GM12878 (cell line): ENCODE measurements at regions of chr9 and their contacts with region 1.

Region 1: GRCh38 chr9:128254855-128255759 is 20.7 kb downstream of the GOLGA2 start:
- DNase-seq: no peak
- ATAC-seq: peak; percentile 77
- H3K4me3 ChIP-seq: no peak overlapping the region
- H3K27ac ChIP-seq: no peak overlapping the region
- H3K4me1 ChIP-seq: no peaks in the 10 kb centered on the region
- H3K27me3 ChIP-seq: peaks cover 0 to 3% of the 10 kb centered on the region in 2 experiments; a peak in 2 of 4 replicates
- CTCF ChIP-seq: peak; percentile 68 to 94 (median 88)
- EP300 ChIP-seq: no peak
- POLR2A ChIP-seq: no peak
- RAD21 ChIP-seq: peak; percentile 23; the same call in 1 of the 2 replicates

Region 2: DNA sequence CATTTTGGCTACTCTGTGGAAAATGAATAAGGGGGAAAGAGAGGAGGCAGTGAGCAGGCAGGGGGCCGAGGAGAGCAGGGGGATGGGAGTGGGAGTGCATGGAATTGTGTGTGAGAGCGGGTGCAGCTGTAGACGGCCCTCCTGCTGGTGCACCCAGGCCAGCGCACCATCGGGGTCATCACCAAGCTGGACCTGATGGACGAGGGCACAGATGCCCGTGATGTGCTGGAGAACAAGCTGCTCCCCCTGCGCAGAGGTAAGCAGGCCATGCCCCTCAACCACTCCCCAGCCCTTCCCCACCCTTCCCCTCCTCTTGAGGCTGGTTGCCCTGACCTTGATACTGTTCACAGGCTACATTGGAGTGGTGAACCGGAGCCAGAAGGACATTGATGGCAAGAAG is 35.3 kb before region 1 on chr9:
- CTCF ChIA-PET with region 1: no interaction called
- POLR2A ChIA-PET with region 1: no interaction called
- RAD21 ChIA-PET with region 1: no interaction called
- SMC1A ChIA-PET with region 1: no interaction called
- in situ Hi-C with region 1: no loop called
- intact Hi-C with region 1: no loop called
- DNase-seq: no peak
- ATAC-seq: no peak
- H3K4me3 ChIP-seq: no peak overlapping the region
- H3K27ac ChIP-seq: no peak overlapping the region
- H3K4me1 ChIP-seq: peaks cover 5% of the 10 kb centered on the region; the same call in 1 of the 2 replicates
- H3K27me3 ChIP-seq: no peaks in the 10 kb centered on the region; a peak in 2 of 4 replicates
- CTCF ChIP-seq: no peak
- EP300 ChIP-seq: no peak
- POLR2A ChIP-seq: no peak
- RAD21 ChIP-seq: no peak

Region 3: GRCh38 chr9:128242124-128242523 is 13.0 kb before region 1 on chr9:
- CTCF ChIA-PET with region 1: interaction called, 12 read pairs
- POLR2A ChIA-PET with region 1: no interaction called
- RAD21 ChIA-PET with region 1: no interaction called
- SMC1A ChIA-PET with region 1: interaction called, 3 read pairs
- in situ Hi-C with region 1: no loop called
- intact Hi-C with region 1: no loop called
- DNase-seq: no peak
- ATAC-seq: no peak
- H3K4me3 ChIP-seq: no peak overlapping the region
- H3K27ac ChIP-seq: no peak overlapping the region
- H3K4me1 ChIP-seq: no peaks in the 10 kb centered on the region
- H3K27me3 ChIP-seq: no peaks in the 10 kb centered on the region
- CTCF ChIP-seq: no peak
- EP300 ChIP-seq: no peak
- POLR2A ChIP-seq: no peak
- RAD21 ChIP-seq: no peak

Region 4: DNA sequence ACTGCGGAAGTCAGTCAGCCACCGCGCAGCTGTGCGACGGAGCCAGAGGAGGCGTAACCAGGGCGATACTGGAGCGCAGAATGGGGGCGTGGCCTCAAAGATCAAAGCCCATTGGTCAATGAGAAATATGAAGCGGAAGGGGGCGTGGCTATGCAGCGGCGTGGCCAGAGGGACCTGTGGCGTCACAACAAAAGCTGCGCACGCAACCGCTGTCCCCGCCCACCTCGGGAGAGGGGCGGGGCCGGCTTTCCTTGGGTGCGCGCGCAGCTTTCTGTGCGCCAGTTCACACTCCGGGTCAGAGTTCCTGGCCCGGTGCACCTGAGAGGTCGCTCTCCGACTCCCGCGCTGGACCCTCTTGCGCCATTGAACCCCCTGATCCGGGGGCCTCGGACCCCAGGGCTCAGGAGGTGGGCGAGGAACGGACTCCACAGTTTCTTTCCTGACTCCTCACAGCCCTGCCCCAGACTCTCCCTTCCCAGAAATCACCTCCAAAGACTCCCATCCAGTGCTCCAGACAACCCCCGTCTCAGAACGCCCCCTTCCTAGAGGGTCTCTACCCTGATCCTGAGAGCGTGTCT is 21.0 kb after region 1 on chr9 and contains the starts of genes GOLGA2 and SWI5:
- CTCF ChIA-PET with region 1: interaction called, 11 read pairs
- POLR2A ChIA-PET with region 1: interaction called, 6 read pairs
- RAD21 ChIA-PET with region 1: no interaction called
- SMC1A ChIA-PET with region 1: interaction called, 4 read pairs
- in situ Hi-C with region 1: no loop called
- intact Hi-C with region 1: no loop called
- DNase-seq: peak; percentile 99
- ATAC-seq: peak; percentile 98
- H3K4me3 ChIP-seq: peak within 1 kb of the TSS; percentile 99
- H3K27ac ChIP-seq: peak within 1 kb of the TSS; percentile 89
- H3K4me1 ChIP-seq: 0 out of 2 replicates have a peak, but pooled peaks cover 4% of the 10 kb centered on the region
- H3K27me3 ChIP-seq: no peaks in the 10 kb centered on the region
- CTCF ChIP-seq: no peak
- EP300 ChIP-seq: no peak
- POLR2A ChIP-seq: peak; percentile 99
- RAD21 ChIP-seq: no peak
- polyA plus RNA-seq, gene GOLGA2: 5.9 to 8.0 TPM
- polyA plus RNA-seq, gene SWI5: 14.8 to 19.3 TPM

Region 5: GRCh38 chr9:128421482-128421980 is 166.4 kb after region 1 on chr9:
- CTCF ChIA-PET with region 1: no interaction called
- POLR2A ChIA-PET with region 1: no interaction called
- RAD21 ChIA-PET with region 1: no interaction called
- SMC1A ChIA-PET with region 1: no interaction called
- in situ Hi-C with region 1: no loop called
- intact Hi-C with region 1: no loop called
- DNase-seq: no peak
- ATAC-seq: no peak
- H3K4me3 ChIP-seq: peak overlapping the region; percentile 93; the same call in 1 of the 2 replicates
- H3K27ac ChIP-seq: no peak overlapping the region
- H3K4me1 ChIP-seq: peaks cover 10% of the 10 kb centered on the region
- H3K27me3 ChIP-seq: peaks cover 7 to 9% of the 10 kb centered on the region in 2 experiments
- CTCF ChIP-seq: no peak
- EP300 ChIP-seq: no peak
- POLR2A ChIP-seq: no peak
- RAD21 ChIP-seq: no peak

Region 6: DNA sequence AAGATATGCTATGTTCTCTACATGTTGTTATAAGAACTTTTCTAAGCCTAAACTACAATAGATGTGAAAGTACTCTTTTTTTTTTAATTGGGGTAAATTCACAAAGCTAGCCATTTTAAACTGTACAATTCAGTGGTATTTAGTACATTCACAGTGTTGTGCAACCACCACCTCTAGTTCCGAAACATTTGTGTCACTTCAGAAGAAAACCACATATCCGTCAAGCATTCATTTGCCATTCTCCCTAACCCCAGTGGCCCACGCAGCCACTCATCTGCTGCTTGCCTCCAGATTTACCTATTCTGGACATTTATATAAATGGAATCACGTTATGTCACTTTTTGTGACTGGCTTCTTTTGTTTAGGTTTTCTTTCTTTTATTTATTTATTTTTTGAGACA is 340.4 kb after region 1 on chr9:
- CTCF ChIA-PET with region 1: no interaction called
- POLR2A ChIA-PET with region 1: no interaction called
- RAD21 ChIA-PET with region 1: no interaction called
- SMC1A ChIA-PET with region 1: no interaction called
- in situ Hi-C with region 1: no loop called
- intact Hi-C with region 1: no loop called
- DNase-seq: no peak
- ATAC-seq: no peak
- H3K4me3 ChIP-seq: no peak overlapping the region
- H3K27ac ChIP-seq: no peak overlapping the region
- H3K4me1 ChIP-seq: no peaks in the 10 kb centered on the region
- H3K27me3 ChIP-seq: no peaks in the 10 kb centered on the region
- CTCF ChIP-seq: no peak
- EP300 ChIP-seq: no peak
- POLR2A ChIP-seq: no peak
- RAD21 ChIP-seq: no peak